Naive thymus-derived CD4-positive, alpha-beta T cell (primary cell): ENCODE measurements at regions of chr17 and their contacts with region 1.

Region 1: GRCh38 chr17:40615295-40615988 is 32.2 kb downstream of the SMARCE1 start:
- DNase-seq: peak in 8 of 9 donors; percentile 24 to 82 (median 70)
- ATAC-seq: peak; percentile 79
- H3K4me3 ChIP-seq: peak overlapping the region; percentile 31
- H3K4me3 Mint-ChIP-seq: peak overlapping the region; percentile 71 to 88 (median 82)
- H3K27ac ChIP-seq: peak overlapping the region; percentile 94
- H3K27ac Mint-ChIP-seq: peak overlapping the region; percentile 90 to 100 (median 98)
- H3K4me1 ChIP-seq: peaks cover 50 to 77% of the 10 kb centered on the region in 2 donors
- H3K4me1 Mint-ChIP-seq: peaks cover 41 to 84% (median 79%) of the 10 kb centered on the region in 7 donors
- H3K27me3 ChIP-seq: no peaks in the 10 kb centered on the region
- H3K27me3 Mint-ChIP-seq: no peaks in the 10 kb centered on the region

Region 2: DNA sequence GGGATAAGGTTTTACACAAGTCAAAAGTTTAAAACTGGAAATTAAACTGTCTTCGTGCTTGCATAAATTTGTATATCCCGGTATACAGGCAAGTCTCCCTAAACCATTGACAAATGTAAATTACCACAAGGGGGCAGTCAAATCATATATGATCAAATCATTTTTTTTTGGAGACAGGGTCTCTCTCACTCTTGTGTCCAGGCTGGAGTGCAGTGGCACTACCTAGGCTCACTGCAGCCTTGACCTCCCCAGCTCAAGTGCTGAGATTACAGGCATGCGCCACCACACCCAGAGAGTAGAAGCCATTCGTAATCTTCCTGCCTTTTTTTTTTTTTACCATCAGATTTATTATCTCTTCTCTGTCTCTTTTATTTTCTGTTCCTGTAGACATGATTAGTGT is 216.3 kb before region 1 on chr17:
- CTCF ChIA-PET with region 1: interaction called, 4 read pairs
- POLR2A ChIA-PET with region 1: no interaction called
- intact Hi-C with region 1: loop called in 1 of 2 experiments (anchors 1 kb)
- DNase-seq: peak in 6 of 9 donors; percentile 39 to 69 (median 60)
- ATAC-seq: peak; percentile 75
- H3K4me3 ChIP-seq: no peak overlapping the region
- H3K4me3 Mint-ChIP-seq: no peak overlapping the region
- H3K27ac ChIP-seq: no peak overlapping the region
- H3K27ac Mint-ChIP-seq: peak overlapping the region in 3 of 9 donors; percentile 6 to 65 (median 64)
- H3K4me1 ChIP-seq: no peaks in the 10 kb centered on the region
- H3K4me1 Mint-ChIP-seq: peaks cover 8 to 36% (median 22%) of the 10 kb centered on the region in 7 donors
- H3K27me3 ChIP-seq: no peaks in the 10 kb centered on the region
- H3K27me3 Mint-ChIP-seq: no peaks in the 10 kb centered on the region

Region 3: GRCh38 chr17:40531051-40531991 is 84.1 kb before region 1 on chr17:
- CTCF ChIA-PET with region 1: interaction called, 8 read pairs
- POLR2A ChIA-PET with region 1: interaction called, 6 read pairs
- intact Hi-C with region 1: loop called in 1 of 2 experiments (anchors 1 kb)
- DNase-seq: peak in 6 of 9 donors; percentile 39 to 84 (median 66)
- ATAC-seq: peak; percentile 14
- H3K4me3 ChIP-seq: peak overlapping the region; percentile 15
- H3K4me3 Mint-ChIP-seq: peak overlapping the region in 8 of 10 donors; percentile 0 to 78 (median 48)
- H3K27ac ChIP-seq: no peak overlapping the region
- H3K27ac Mint-ChIP-seq: peak overlapping the region; percentile 72 to 99 (median 92)
- H3K4me1 ChIP-seq: peaks cover 63 to 67% of the 10 kb centered on the region in 2 donors
- H3K4me1 Mint-ChIP-seq: peaks cover 47 to 90% (median 70%) of the 10 kb centered on the region in 7 donors
- H3K27me3 ChIP-seq: no peaks in the 10 kb centered on the region
- H3K27me3 Mint-ChIP-seq: peaks cover 0 to 3% (median 0%) of the 10 kb centered on the region in 5 donors

Region 4: DNA sequence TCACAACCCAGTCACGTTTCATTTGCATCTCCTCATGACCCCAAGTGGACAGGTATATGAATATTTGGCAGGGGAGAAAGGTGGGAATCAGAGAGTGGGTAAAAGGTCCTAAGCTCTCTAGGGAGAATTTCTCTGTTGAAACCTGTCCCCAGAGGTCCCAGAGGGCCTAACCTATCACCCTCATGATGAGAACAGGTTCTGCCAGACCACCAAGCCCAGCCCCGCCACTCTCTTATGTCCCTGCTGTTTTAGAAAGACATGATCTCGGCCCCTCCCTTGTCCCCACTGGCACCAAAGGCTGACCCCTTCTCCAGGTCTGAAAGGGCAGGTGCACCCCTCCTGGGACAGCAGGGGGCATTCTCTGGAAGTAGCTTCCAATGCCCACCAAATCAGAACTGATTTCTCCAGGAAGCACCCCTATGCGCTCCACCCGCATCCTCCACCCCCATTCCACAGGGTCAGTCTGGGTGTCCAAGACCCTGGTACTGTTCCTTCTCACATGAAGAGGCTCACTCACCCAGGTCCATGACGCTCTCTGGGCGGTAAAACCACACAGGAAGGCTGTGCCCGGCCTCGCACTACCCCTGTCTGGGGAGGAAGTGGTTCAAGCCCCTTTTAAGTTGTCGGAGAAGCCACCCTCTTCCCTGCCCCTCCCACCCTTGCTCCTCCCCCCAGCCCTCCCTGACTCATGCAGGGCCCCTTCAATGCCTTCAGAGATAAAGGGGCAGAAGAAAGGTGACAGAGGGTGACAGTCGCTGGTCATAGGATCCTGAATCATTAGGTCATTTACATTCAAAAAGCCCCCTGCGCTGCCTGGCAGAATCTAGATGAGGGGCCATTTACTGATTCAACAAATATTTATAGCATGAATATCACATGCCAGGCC is 50.3 kb before region 1 on chr17 and contains the start of gene CCR7:
- CTCF ChIA-PET with region 1: interaction called, 425 read pairs
- POLR2A ChIA-PET with region 1: interaction called, 2,132 read pairs
- intact Hi-C with region 1: loop called (anchors 1 kb)
- DNase-seq: peak; percentile 68 to 92 (median 86)
- ATAC-seq: peak; percentile 77
- H3K4me3 ChIP-seq: peak within 1 kb of the TSS; percentile 90
- H3K4me3 Mint-ChIP-seq: peak within 1 kb of the TSS; percentile 90 to 100 (median 98)
- H3K27ac ChIP-seq: peak within 1 kb of the TSS; percentile 99
- H3K27ac Mint-ChIP-seq: peak within 1 kb of the TSS; percentile 92 to 100 (median 100)
- H3K4me1 ChIP-seq: peaks cover 37 to 72% of the 10 kb centered on the region in 2 donors
- H3K4me1 Mint-ChIP-seq: peaks cover 29 to 57% (median 52%) of the 10 kb centered on the region in 7 donors
- H3K27me3 ChIP-seq: no peaks in the 10 kb centered on the region
- H3K27me3 Mint-ChIP-seq: peaks cover 0 to 2% (median 0%) of the 10 kb centered on the region in 5 donors
- total RNA-seq, gene CCR7: 153 to 675 (median 262) TPM

Region 5: DNA sequence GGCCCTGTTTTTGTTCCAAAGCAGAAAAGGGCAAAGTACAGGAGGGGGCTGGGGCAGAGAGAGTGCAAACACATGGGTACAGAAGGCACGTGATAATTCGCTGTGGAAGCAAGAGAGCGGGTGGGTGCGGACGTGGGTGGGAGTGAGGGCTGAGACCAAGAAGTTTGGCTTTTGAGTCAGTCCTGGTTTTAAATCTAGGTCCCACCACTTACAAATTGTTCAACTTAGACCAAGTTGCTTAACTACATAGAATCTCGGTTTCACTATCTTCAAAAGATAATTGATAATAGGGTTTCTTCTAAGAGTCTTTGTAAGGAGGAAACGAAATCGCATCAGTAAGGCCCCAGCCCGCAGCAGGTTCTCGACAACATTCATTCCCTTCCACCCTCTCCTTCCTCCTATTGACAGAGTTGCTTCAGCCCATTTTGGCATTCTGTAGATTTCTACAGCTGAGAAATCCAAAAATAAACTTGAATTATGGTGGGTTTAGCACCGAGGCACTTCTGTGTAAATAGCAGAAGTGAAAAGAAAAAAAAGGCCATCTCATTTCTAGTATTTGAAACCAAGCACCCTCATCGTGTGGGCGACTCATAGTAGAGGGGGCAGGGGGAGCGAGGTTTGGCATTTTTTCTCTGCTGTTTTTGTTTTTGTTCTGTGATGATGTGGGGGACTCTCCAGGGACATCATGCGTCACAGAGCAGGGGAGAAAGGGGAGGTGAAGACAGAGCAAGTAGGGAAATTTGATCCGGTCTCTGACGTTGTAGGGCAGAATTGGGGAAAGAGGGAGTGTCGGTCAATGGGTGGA is 16.6 kb before region 1 on chr17:
- CTCF ChIA-PET with region 1: interaction called, 57 read pairs
- POLR2A ChIA-PET with region 1: interaction called, 175 read pairs
- intact Hi-C with region 1: loop called (anchors 1 kb)
- DNase-seq: peak in 8 of 9 donors; percentile 67 to 93 (median 80)
- ATAC-seq: peak; percentile 80
- H3K4me3 ChIP-seq: peak overlapping the region; percentile 25
- H3K4me3 Mint-ChIP-seq: peak overlapping the region; percentile 53 to 88 (median 76)
- H3K27ac ChIP-seq: peak overlapping the region; percentile 94
- H3K27ac Mint-ChIP-seq: peak overlapping the region; percentile 95 to 100 (median 99)
- H3K4me1 ChIP-seq: peaks cover 62 to 98% of the 10 kb centered on the region in 2 donors
- H3K4me1 Mint-ChIP-seq: peaks cover 64 to 100% (median 96%) of the 10 kb centered on the region in 7 donors
- H3K27me3 ChIP-seq: no peaks in the 10 kb centered on the region
- H3K27me3 Mint-ChIP-seq: no peaks in the 10 kb centered on the region

Region 6: DNA sequence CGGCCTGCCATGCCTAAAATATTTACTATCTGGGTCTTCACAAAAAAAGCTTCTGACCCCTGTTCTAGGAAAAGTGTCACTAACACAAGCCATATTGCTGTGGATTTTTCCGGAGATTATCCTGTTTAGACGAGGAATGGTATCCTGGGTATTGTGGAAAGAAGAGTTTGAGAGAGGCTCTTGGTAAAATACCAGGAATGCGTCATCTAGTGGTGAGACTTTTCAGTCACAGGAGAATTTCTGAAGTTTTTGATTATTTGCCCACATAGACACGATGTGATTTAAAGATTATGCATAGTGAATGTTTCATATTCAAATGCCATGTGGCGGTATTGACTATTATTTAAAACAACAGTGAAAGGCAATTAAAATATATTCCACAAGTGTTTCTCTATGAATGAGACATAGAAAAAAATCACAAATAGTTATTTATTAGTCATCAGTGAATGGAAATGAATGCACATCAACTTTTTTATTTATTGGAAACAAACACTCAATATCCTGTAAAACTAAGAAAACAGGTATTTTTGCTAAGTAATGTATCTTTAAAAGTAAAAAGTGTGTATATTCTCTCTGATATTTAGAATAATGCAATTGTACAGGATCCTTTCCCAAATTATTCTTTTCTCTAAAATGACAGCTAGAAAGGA is 176.5 kb after region 1 on chr17:
- CTCF ChIA-PET with region 1: no interaction called
- POLR2A ChIA-PET with region 1: no interaction called
- intact Hi-C with region 1: loop called in 1 of 2 experiments (anchors 1 kb)
- DNase-seq: no peak
- ATAC-seq: no peak
- H3K4me3 ChIP-seq: no peak overlapping the region
- H3K4me3 Mint-ChIP-seq: no peak overlapping the region
- H3K27ac ChIP-seq: no peak overlapping the region
- H3K27ac Mint-ChIP-seq: no peak overlapping the region
- H3K4me1 ChIP-seq: no peaks in the 10 kb centered on the region
- H3K4me1 Mint-ChIP-seq: no peaks in the 10 kb centered on the region
- H3K27me3 ChIP-seq: no peaks in the 10 kb centered on the region
- H3K27me3 Mint-ChIP-seq: peaks cover 13 to 34% (median 21%) of the 10 kb centered on the region in 5 donors